ENCODE measurements at regions of chr3 and their contacts with region 1.

Region 1: DNA sequence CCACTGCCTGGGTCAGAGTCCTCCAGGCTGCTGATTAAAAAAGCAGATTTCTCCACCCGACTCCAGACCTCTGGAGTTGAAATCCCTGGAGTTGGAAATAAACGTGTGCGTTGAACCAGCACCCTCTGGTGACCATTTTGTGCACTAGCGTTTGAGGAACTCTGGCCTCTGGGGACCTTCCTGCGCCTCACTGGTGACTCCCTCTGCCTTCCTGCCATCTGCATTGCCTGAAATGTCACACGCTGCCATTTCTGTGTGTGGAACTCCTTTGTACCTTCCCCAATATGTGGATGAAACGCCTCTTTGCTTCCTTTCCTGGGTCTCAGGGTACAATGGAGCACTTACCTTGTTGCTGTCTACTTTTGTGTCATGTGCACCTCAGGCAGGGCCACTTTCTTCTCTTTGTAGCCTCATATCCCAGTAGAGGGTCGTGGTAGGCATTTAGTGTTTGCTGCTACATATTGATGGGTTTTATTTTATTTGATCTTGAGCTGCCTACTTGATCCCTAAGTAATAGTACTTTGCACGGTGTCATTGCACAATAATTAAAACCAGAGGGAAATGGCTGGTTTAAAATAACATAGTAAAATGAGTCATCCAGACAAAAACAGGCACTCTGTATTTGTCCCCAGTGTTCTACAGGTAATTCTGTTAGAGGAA is 56.8 kb downstream of the GPR171 start:
- DNase-seq: peak; percentile 44 to 52 (median 46)
- H3K4me3 ChIP-seq: no peak overlapping the region
- H3K4me3 Mint-ChIP-seq: no peak overlapping the region
- H3K27ac ChIP-seq: no peak overlapping the region
- H3K27ac Mint-ChIP-seq: peak overlapping the region in 1 of 7 donors; percentile 39
- H3K4me1 ChIP-seq: no peaks in the 10 kb centered on the region
- H3K4me1 Mint-ChIP-seq: no peaks in the 10 kb centered on the region
- H3K27me3 ChIP-seq: no peaks in the 10 kb centered on the region
- H3K27me3 Mint-ChIP-seq: peaks cover 12 to 13% of the 10 kb centered on the region in 2 donors

Region 2: GRCh38 chr3:150528354-150528797 is 617.8 kb before region 1 on chr3:
- CTCF ChIA-PET with region 1: interaction called, 4 read pairs
- POLR2A ChIA-PET with region 1: no interaction called
- intact Hi-C with region 1: loop called (anchors 2 kb)
- DNase-seq: peak in 4 of 5 donors; percentile 25 to 42 (median 28)
- H3K4me3 ChIP-seq: no peak overlapping the region
- H3K4me3 Mint-ChIP-seq: no peak overlapping the region
- H3K27ac ChIP-seq: no peak overlapping the region
- H3K27ac Mint-ChIP-seq: no peak overlapping the region
- H3K4me1 ChIP-seq: no peaks in the 10 kb centered on the region
- H3K4me1 Mint-ChIP-seq: peaks cover 0 to 5% (median 4%) of the 10 kb centered on the region in 4 donors
- H3K27me3 ChIP-seq: no peaks in the 10 kb centered on the region
- H3K27me3 Mint-ChIP-seq: no peaks in the 10 kb centered on the region

Region 3: DNA sequence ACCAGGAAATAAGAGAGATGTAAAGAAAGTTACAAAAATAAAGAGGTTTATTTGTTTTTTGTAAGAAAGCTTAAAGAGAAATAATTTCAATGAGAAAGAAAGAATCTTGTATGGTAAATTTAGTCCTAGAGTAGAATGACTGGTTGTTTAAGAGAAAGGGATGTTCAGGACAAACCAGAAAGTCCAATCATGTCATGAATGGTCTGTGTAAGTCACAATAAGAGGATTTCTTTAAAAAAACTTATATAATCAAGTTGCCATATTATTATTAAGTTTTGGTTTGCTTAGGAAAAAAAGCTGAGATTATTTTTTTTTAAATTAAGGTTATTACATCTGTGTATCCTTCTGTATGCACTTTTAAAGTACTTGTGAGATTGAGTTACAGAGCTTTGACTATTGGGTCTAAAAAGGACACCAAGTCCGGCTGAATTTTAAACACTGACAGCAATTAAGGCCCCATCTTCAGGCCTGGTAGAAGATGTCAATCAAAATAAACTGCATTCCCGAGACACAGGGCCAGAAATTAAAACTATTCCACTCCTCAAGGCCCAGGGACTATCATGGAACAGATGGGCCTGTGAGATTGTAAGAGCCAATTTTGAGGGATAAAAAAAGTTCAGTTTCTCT is 454.7 kb before region 1 on chr3:
- CTCF ChIA-PET with region 1: no interaction called
- POLR2A ChIA-PET with region 1: no interaction called
- intact Hi-C with region 1: no loop called
- DNase-seq: no peak
- H3K4me3 ChIP-seq: no peak overlapping the region
- H3K4me3 Mint-ChIP-seq: no peak overlapping the region
- H3K27ac ChIP-seq: no peak overlapping the region
- H3K27ac Mint-ChIP-seq: no peak overlapping the region
- H3K4me1 ChIP-seq: no peaks in the 10 kb centered on the region
- H3K4me1 Mint-ChIP-seq: no peaks in the 10 kb centered on the region
- H3K27me3 ChIP-seq: no peaks in the 10 kb centered on the region
- H3K27me3 Mint-ChIP-seq: peaks cover 0 to 3% of the 10 kb centered on the region in 2 donors

Region 4: DNA sequence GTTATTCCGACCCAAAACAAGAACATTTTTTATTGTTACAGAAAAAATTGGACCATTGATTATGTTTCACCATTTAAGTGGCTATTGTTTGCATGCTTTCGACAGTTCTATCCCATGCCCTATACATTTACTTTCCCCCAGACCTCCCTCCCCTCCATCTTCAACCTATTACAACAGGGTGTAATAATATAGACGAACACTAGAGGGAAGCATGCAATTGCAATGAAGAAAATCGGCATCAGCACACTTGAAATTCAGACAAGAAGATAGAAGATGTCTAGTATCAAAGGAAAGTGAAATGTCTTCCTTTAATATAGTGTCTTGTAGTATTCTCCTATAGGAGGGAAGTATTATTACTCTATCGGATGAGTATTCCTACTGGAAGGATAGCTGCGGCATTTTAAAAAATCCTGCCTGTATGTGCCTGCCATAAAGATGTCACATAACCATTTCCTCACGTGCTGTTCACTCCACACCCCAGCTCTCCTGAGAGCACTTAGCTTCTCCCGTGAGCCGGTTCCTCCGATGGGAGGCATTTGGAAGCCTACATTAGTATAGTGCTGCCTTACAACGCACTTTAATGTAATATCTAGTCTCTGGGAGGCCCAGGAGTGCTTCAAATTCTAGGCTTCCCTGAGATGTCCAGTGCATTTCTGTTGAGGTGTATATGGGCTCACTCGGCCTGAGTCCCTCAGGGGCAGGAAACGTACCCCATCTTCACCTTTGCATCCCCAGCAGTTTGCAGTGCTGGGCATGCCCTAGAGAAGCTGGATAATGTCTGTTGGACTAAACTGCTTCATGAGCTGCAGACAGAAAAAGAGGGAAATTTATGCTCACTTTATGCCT is 424.7 kb before region 1 on chr3:
- CTCF ChIA-PET with region 1: interaction called, 14 read pairs
- POLR2A ChIA-PET with region 1: no interaction called
- intact Hi-C with region 1: no loop called
- DNase-seq: peak in 4 of 5 donors; percentile 67 to 75 (median 68)
- H3K4me3 ChIP-seq: no peak overlapping the region
- H3K4me3 Mint-ChIP-seq: peak overlapping the region in 1 of 8 donors; percentile 48
- H3K27ac ChIP-seq: no peak overlapping the region
- H3K27ac Mint-ChIP-seq: peak overlapping the region in 2 of 7 donors; percentile 11 to 53
- H3K4me1 ChIP-seq: peaks cover 12% of the 10 kb centered on the region
- H3K4me1 Mint-ChIP-seq: peaks cover 6 to 11% (median 8%) of the 10 kb centered on the region in 4 donors
- H3K27me3 ChIP-seq: no peaks in the 10 kb centered on the region
- H3K27me3 Mint-ChIP-seq: no peaks in the 10 kb centered on the region

Region 5: GRCh38 chr3:151067158-151067557 is 79.0 kb before region 1 on chr3:
- CTCF ChIA-PET with region 1: interaction called, 6 read pairs
- POLR2A ChIA-PET with region 1: no interaction called
- intact Hi-C with region 1: loop called (anchors 5 kb)
- DNase-seq: no peak
- H3K4me3 ChIP-seq: no peak overlapping the region
- H3K4me3 Mint-ChIP-seq: no peak overlapping the region
- H3K27ac ChIP-seq: no peak overlapping the region
- H3K27ac Mint-ChIP-seq: no peak overlapping the region
- H3K4me1 ChIP-seq: no peaks in the 10 kb centered on the region
- H3K4me1 Mint-ChIP-seq: no peaks in the 10 kb centered on the region
- H3K27me3 ChIP-seq: no peaks in the 10 kb centered on the region
- H3K27me3 Mint-ChIP-seq: peaks cover 5 to 13% of the 10 kb centered on the region in 2 donors

Region 6: DNA sequence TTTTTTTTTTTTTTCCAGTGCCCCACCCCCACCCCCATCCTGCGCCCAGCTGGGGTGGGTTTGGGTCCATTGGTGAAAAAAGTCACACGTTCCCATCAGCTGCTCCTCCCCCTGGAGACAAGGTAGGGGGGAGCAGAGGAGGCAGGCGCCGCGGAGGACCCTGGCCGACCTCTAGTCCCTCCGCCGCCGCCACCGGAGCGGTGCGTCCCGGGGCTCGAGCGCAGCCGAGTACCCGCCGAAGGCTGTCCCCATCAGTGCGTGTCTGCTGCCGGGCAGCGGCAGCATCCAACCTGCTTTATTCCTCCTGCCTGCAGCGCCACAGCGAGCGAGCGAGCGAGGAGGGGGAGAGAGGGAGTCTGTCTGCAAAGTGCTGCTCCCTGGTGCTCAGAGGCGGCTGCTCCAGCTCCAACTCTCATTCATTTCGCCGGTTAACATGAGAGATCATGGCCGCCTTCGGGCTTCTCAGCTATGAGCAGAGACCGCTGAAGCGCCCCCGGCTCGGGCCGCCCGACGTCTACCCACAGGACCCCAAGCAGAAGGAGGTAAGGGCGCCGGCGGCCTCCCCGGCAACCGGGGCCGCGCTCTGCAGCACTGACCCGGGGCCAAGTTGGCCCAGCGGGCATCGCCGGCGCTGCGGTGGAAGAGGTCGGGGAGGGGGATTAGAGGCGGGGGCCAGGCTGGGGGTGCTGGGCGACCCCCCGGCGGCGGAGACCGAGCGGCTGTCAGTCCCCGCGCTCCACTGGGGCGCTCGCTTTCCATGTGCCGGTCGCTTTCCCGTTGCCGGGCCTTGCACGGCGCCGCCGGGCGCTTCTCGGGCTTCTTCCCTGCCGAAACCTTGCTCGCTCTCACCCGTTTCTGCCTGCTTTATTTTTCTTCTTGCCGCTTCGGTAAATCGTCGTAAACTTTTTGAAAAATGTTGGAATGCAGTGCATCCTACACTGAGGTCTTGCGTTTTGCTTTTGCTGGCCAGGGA is 59.4 kb before region 1 on chr3:
- CTCF ChIA-PET with region 1: interaction called, 9 read pairs
- POLR2A ChIA-PET with region 1: interaction called, 3 read pairs
- intact Hi-C with region 1: loop called (anchors 2 kb)
- DNase-seq: peak; percentile 51 to 78 (median 61)
- H3K4me3 ChIP-seq: peak overlapping the region in 1 of 2 donors; percentile 41
- H3K4me3 Mint-ChIP-seq: peak overlapping the region; percentile 86 to 91 (median 89)
- H3K27ac ChIP-seq: no peak overlapping the region
- H3K27ac Mint-ChIP-seq: peak overlapping the region in 2 of 7 donors; percentile 78 to 79
- H3K4me1 ChIP-seq: peaks cover 6% of the 10 kb centered on the region
- H3K4me1 Mint-ChIP-seq: peaks cover 5 to 18% (median 12%) of the 10 kb centered on the region in 4 donors
- H3K27me3 ChIP-seq: peaks cover 17% of the 10 kb centered on the region
- H3K27me3 Mint-ChIP-seq: peaks cover 32% of the 10 kb centered on the region in 2 donors

Region 7: GRCh38 chr3:151156618-151157216 is 10.5 kb after region 1 on chr3:
- CTCF ChIA-PET with region 1: interaction called, 59 read pairs
- POLR2A ChIA-PET with region 1: no interaction called
- intact Hi-C with region 1: no loop called
- DNase-seq: peak; percentile 42 to 49 (median 45)
- H3K4me3 ChIP-seq: no peak overlapping the region
- H3K4me3 Mint-ChIP-seq: no peak overlapping the region
- H3K27ac ChIP-seq: no peak overlapping the region
- H3K27ac Mint-ChIP-seq: no peak overlapping the region
- H3K4me1 ChIP-seq: no peaks in the 10 kb centered on the region
- H3K4me1 Mint-ChIP-seq: peaks cover 0 to 2% (median 0%) of the 10 kb centered on the region in 4 donors
- H3K27me3 ChIP-seq: no peaks in the 10 kb centered on the region
- H3K27me3 Mint-ChIP-seq: peaks cover 8% of the 10 kb centered on the region in 2 donors